Activated CD8-positive, alpha-beta T cell treated with anti-CD3 and anti-CD28 coated beads for 36 hours (primary cell): ENCODE measurements at regions of chr17 and their contacts with region 1.

Region 1: DNA sequence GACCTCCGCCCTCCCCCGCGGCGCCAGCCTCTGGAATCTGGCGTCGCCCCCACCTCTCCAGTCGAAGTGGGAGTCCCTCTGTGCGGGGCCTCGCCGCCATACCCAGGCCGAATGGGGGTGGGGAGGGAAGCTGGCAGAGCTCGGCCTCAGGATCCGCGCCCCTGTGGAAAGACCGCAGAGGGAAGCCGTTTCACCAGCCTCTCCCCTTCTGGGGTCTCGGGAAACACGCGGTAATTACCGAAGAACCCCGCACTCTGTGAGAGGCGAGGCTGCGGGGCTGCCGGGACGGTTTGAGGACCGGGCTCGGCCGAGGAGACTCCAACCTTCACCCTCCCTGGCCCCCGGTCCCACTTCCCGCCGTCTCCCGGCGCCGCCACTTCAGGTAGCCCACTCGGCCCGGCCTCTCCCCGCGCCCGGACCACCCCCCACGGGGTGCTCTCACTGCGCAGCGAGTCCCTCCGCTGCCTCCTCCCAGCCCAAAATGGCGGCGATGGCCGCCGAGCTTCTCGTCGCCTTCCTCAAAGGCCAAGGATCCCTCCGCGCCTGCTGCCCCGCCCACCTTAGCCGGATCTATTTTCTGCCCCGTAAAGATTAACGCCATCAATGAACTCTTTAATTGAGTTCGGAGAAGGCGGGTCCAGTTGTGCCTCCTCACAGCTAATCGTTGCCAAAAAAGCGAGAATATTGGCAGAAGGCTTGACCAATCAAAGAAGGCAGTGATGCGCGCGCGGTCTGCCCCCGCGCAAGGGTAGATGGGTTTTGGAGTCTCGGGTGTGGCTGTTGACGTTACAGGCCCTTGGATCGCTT is 453 bp upstream of the HEXIM2 start:
- DNase-seq: peak; percentile 99
- ATAC-seq: peak; percentile 97
- H3K4me3 Mint-ChIP-seq: peak overlapping the region; percentile 95
- H3K27ac Mint-ChIP-seq: peak overlapping the region; percentile 99
- H3K4me1 Mint-ChIP-seq: peaks cover 39% of the 10 kb centered on the region
- H3K27me3 Mint-ChIP-seq: no peaks in the 10 kb centered on the region
- CTCF ChIP-seq: no peak

Region 2: DNA sequence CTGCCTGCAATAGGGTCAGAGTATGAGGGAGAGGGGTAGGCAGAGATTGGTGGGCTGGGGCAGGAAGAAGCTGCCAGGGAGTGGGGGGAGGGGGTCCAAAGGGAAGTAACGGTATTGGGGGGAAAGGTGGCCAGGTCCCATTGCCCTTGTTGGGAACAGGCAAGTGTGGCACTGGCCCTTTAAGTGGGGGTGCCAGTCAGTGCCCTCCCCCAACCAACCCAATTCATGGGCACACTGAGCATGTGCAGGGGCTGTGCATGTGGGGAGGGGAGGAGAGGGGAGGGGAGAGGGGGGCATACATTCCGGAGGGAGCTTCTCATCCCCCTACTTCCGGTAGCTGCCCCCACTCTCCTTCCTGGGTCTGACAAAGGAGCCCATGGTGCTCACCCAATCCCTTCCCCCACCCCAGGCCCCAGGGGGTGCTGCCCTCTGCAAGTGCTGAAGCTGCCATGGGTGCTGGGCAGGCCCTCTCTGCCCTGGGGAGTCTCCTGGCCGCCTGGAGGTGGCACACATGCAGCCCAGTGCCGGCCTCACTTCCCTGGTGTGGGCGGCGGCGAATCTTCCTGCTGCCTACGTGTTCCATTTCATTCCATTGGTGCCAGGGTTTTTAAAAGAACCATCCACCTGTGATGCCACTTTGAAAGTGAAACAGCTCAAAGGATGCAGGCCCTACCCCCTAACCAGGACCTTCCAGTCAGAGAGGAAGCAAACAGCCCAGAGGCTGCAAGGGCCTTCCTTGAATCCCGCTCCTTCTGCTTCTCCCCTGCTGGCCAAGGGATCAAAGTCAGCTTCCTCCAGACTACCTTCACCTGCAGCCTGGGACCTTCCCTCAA is 11.4 kb after region 1 on chr17:
- CTCF ChIA-PET with region 1: interaction called, 4 read pairs
- POLR2A ChIA-PET with region 1: interaction called, 44 read pairs
- intact Hi-C with region 1: no loop called
- DNase-seq: peak; percentile 77
- ATAC-seq: peak; percentile 78
- H3K4me3 Mint-ChIP-seq: peak overlapping the region; percentile 68
- H3K27ac Mint-ChIP-seq: peak overlapping the region; percentile 89
- H3K4me1 Mint-ChIP-seq: peaks cover 25% of the 10 kb centered on the region
- H3K27me3 Mint-ChIP-seq: no peaks in the 10 kb centered on the region
- CTCF ChIP-seq: no peak